ENCODE measurements at regions of chrX and their contacts with region 1.

Region 1: GRCh38 chrX:55074851-55075467 is at the start of gene PAGE2B:
- DNase-seq: peak in 1 of 3 donors; percentile 49
- ATAC-seq: no peak
- H3K4me3 ChIP-seq: no peak within 1 kb of the TSS
- H3K4me1 ChIP-seq: no peaks in the 10 kb centered on the region
- CTCF ChIP-seq: no peak
- total RNA-seq, gene PAGE2B: not detected

Region 2: GRCh38 chrX:55011294-55011693 is 63.7 kb before region 1 on chrX:
- intact Hi-C with region 1: loop called in 1 of 2 experiments (anchors 10 kb)
- DNase-seq: no peak
- ATAC-seq: no peak
- H3K4me3 ChIP-seq: no peak overlapping the region
- H3K4me1 ChIP-seq: peaks cover 10% of the 10 kb centered on the region
- CTCF ChIP-seq: no peak

Measured in mucosa of descending colon (tissue), 3 donors.